ENCODE measurements at regions of chr6 and their contacts with region 1.

Region 1: DNA sequence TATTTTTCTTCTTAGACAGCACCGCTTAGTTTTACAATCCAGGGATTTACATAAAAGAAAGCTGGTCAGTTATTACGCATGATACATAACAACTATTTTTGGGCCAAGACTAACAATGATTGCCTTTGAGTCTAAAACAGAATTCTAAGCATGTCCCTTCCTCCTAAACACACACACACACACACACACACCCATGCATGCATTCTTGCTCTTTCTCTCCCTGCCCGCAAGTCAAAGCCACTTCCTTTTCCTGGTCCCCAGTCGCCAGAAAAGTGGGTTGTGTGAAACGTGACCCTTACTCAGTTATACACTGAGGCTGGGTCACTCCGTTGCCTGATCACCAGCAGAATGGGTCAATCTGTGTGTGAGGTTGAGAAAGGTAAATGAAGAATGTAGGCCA is 31.4 kb downstream of the FYN start:
- DNase-seq: no peak
- ATAC-seq: no peak
- H3K4me3 Mint-ChIP-seq: no peak overlapping the region
- H3K27ac Mint-ChIP-seq: no peak overlapping the region
- H3K4me1 Mint-ChIP-seq: peaks cover 24% of the 10 kb centered on the region
- H3K27me3 Mint-ChIP-seq: no peaks in the 10 kb centered on the region
- CTCF ChIP-seq: no peak

Region 2: DNA sequence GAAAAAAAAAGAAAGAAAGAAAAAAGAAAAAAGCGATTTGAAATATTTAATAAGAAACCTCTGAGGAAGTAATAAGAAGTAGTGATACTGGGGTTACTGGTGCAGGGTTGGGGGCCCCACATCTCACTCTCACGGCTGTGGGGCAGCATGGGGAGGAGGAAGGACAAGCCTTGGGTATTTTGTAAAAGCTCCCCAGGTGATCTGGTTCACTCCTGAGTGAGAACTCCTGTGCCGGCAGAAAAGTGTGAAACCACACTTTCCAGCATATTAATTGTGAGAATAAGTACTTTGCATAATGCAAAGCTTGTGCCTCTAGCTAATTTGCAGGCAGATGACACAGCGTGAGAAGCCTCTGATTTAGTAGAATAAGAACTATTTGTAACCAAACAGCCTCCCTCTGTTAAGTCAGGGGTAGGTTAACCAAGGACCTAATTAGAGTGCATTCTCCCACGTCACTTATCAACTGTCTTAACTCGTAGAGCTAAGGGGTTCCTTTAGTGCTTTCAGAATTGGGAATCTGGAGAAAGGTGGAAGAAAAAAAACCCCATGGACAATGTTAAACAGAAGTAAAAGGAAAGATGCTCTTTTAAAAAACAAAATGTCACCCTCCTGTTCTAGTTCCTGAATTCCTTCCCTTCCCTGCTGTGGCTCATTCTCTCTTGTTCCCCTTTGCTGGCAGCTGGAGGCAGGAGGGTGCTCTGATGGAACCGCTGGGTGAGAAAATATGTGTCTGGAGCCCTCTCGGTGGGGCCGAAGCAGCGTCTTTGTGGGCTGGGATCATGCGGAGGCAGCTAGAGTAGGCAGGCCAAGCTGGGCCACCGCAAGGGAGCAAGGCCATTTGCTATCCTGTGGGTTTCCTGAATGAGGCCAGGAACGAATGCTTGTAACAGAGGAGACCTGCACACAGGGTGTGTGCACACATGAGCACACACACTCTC is 77.3 kb before region 1 on chr6:
- CTCF ChIA-PET with region 1: no interaction called
- POLR2A ChIA-PET with region 1: interaction called, 6 read pairs
- intact Hi-C with region 1: loop called (anchors 5 kb)
- DNase-seq: no peak
- ATAC-seq: peak; percentile 82
- H3K4me3 Mint-ChIP-seq: peak overlapping the region; percentile 61
- H3K27ac Mint-ChIP-seq: peak overlapping the region; percentile 81
- H3K4me1 Mint-ChIP-seq: peaks cover 94% of the 10 kb centered on the region
- H3K27me3 Mint-ChIP-seq: no peaks in the 10 kb centered on the region
- CTCF ChIP-seq: no peak

Region 3: DNA sequence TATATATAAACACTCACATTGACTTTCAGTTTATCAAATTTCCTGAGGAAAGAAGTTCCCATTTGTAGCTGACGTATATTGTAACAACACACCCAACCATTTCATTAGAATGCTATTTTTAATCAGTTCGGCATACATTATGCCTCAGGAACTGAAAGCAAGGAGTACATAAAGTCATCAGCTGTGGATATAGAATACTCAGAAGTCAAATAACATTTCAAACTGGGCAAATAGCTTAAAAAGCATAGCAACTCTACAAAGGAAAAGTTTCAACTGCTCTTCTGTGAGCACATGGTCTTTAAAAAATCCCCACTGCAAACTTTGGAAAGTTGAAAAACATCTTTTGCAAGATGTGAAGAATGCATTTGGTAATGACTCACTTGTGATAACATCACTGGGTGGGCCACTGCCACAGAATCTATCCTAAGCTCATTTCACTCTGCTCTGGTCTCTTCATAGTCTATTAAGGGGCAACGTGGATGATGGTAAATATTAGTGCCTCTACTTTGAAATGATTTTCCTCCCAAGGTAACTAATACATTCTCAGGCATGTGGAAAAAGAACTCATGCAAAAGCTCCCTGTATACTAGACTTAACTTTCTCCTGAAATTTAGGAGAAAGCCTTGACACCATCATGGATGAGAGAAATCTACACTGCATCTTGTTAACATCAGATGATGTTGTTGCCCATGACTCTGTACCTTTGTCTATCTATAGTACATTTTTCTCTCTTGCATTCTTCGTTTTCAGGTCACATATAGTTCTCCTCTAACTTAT is 17.8 kb before region 1 on chr6:
- CTCF ChIA-PET with region 1: interaction called, 7 read pairs
- POLR2A ChIA-PET with region 1: interaction called, 19 read pairs
- intact Hi-C with region 1: no loop called
- DNase-seq: no peak
- ATAC-seq: peak; percentile 57
- H3K4me3 Mint-ChIP-seq: no peak overlapping the region
- H3K27ac Mint-ChIP-seq: peak overlapping the region; percentile 77
- H3K4me1 Mint-ChIP-seq: peaks cover 28% of the 10 kb centered on the region
- H3K27me3 Mint-ChIP-seq: no peaks in the 10 kb centered on the region
- CTCF ChIP-seq: no peak

Region 4: GRCh38 chr6:111894272-111894671 is 52.5 kb after region 1 on chr6:
- CTCF ChIA-PET with region 1: no interaction called
- POLR2A ChIA-PET with region 1: no interaction called
- intact Hi-C with region 1: no loop called
- DNase-seq: no peak
- ATAC-seq: no peak
- H3K4me3 Mint-ChIP-seq: no peak overlapping the region
- H3K27ac Mint-ChIP-seq: no peak overlapping the region
- H3K4me1 Mint-ChIP-seq: no peaks in the 10 kb centered on the region
- H3K27me3 Mint-ChIP-seq: peaks cover 2% of the 10 kb centered on the region
- CTCF ChIP-seq: no peak

Region 5: GRCh38 chr6:112429226-112429625 is 587.4 kb after region 1 on chr6:
- CTCF ChIA-PET with region 1: no interaction called
- POLR2A ChIA-PET with region 1: no interaction called
- intact Hi-C with region 1: no loop called
- DNase-seq: no peak
- ATAC-seq: no peak
- H3K4me3 Mint-ChIP-seq: no peak overlapping the region
- H3K27ac Mint-ChIP-seq: no peak overlapping the region
- H3K4me1 Mint-ChIP-seq: no peaks in the 10 kb centered on the region
- H3K27me3 Mint-ChIP-seq: no peaks in the 10 kb centered on the region
- CTCF ChIP-seq: no peak